Pancreas (tissue), 10 donors: ENCODE measurements at regions of chr9 and their contacts with region 1.

Region 1: GRCh38 chr9:36748322-36748899 is 175.7 kb downstream of the MELK start:
- DNase-seq: peak in 2 of 6 donors; percentile 21 to 65
- ATAC-seq: peak in 2 of 4 donors; percentile 67 to 83
- H3K4me3 ChIP-seq: no peak overlapping the region
- H3K27ac ChIP-seq: no peak overlapping the region
- H3K4me1 ChIP-seq: no peaks in the 10 kb centered on the region
- H3K27me3 ChIP-seq: peaks cover 0 to 6% (median 0%) of the 10 kb centered on the region in 4 donors
- CTCF ChIP-seq: no peak

Region 2: GRCh38 chr9:35871497-35871896 is 876.9 kb before region 1 on chr9:
- intact Hi-C with region 1: no loop called
- DNase-seq: peak in 2 of 6 donors; percentile 41 to 74
- ATAC-seq: peak in 3 of 4 donors; percentile 30 to 39 (median 31)
- H3K4me3 ChIP-seq: no peak overlapping the region
- H3K27ac ChIP-seq: no peak overlapping the region
- H3K4me1 ChIP-seq: no peaks in the 10 kb centered on the region
- H3K27me3 ChIP-seq: no peaks in the 10 kb centered on the region
- CTCF ChIP-seq: no peak

Region 3: GRCh38 chr9:36337865-36338264 is 410.5 kb before region 1 on chr9:
- intact Hi-C with region 1: no loop called
- DNase-seq: no peak
- ATAC-seq: peak in 2 of 4 donors; percentile 37 to 42
- H3K4me3 ChIP-seq: no peak overlapping the region
- H3K27ac ChIP-seq: no peak overlapping the region
- H3K4me1 ChIP-seq: no peaks in the 10 kb centered on the region
- H3K27me3 ChIP-seq: no peaks in the 10 kb centered on the region
- CTCF ChIP-seq: no peak

Region 4: GRCh38 chr9:36592801-36593583 is 155.4 kb before region 1 on chr9:
- intact Hi-C with region 1: no loop called
- DNase-seq: no peak
- ATAC-seq: no peak
- H3K4me3 ChIP-seq: no peak overlapping the region
- H3K27ac ChIP-seq: no peak overlapping the region
- H3K4me1 ChIP-seq: no peaks in the 10 kb centered on the region
- H3K27me3 ChIP-seq: no peaks in the 10 kb centered on the region
- CTCF ChIP-seq: no peak

Region 5: DNA sequence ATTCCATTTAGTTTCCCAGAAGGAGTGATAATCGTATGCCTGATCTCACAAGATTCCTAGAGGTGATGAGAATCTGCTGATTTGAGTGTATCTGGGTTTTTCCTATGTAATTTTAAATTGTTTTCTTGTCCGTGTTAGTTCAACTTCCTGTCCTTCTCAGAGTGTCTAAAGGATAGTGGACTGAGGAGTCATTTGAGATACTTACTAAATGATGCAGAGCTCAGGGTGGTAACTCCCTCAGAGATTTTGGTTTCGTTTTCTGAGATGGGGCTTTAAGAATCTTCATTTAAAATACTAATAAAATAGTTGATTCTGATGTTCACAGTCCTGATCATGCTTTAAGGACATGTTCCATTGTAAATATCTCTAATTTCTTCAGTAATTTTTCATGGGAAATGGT is 145.4 kb before region 1 on chr9:
- intact Hi-C with region 1: no loop called
- DNase-seq: no peak
- ATAC-seq: no peak
- H3K4me3 ChIP-seq: no peak overlapping the region
- H3K27ac ChIP-seq: no peak overlapping the region
- H3K4me1 ChIP-seq: no peaks in the 10 kb centered on the region
- H3K27me3 ChIP-seq: no peaks in the 10 kb centered on the region
- CTCF ChIP-seq: no peak

Region 6: DNA sequence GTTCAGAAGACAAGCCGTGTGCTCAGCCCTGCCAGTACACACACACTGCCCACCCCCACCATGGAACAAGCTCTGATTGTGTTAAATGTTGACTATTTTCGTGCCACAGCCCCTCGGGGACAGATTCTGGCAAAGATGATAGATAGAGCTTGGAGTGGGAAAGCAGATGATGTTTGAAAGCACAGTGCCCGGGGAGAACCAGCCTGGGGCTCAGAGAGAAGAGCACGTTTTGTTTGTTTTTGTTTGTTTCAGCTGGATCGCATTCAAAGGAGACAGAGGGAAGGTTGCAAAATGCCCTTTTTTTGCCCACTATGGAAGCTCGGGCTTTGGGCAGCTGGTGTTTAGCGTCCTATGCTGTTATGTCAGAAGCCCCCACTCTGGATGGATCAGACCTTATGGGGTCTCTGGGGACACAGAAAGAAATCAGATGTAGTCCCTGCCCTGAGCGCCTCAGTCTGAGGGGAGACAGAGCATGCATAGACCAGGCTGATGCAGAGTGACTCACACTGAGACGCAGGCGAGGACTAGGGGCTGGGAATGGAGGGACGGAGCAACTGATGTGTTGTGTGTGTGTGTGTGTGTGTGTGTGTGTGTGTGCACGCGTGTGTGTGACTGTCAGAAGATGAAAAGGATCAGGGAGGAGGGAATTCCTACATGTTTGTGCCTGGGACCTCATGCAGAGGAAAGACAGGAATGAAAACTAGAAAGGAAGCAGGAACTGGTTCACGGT is 53.9 kb after region 1 on chr9:
- intact Hi-C with region 1: loop called in 1 of 3 experiments (anchors 10 kb)
- DNase-seq: no peak
- ATAC-seq: no peak
- H3K4me3 ChIP-seq: no peak overlapping the region
- H3K27ac ChIP-seq: no peak overlapping the region
- H3K4me1 ChIP-seq: no peaks in the 10 kb centered on the region
- H3K27me3 ChIP-seq: no peaks in the 10 kb centered on the region
- CTCF ChIP-seq: no peak